HCT116 (cell line): ENCODE measurements at regions of chr20 and their contacts with region 1.

Region 1: GRCh38 chr20:9359561-9360308 is 154.7 kb upstream of the LAMP5 start:
- DNase-seq: peak; percentile 46
- ATAC-seq: peak; percentile 83
- H3K4me3 ChIP-seq: no peak overlapping the region
- H3K27ac ChIP-seq: no peak overlapping the region
- H3K4me1 ChIP-seq: no peaks in the 10 kb centered on the region
- H3K27me3 ChIP-seq: no peaks in the 10 kb centered on the region
- CTCF ChIP-seq: peak; percentile 27 to 69 (median 66); a peak in 4 of 6 replicates
- POLR2A ChIP-seq: no peak
- RAD21 ChIP-seq: peak; percentile 72

Region 2: GRCh38 chr20:8756410-8756809 is 603.3 kb before region 1 on chr20:
- CTCF ChIA-PET with region 1: interaction called, 6 read pairs
- POLR2A ChIA-PET with region 1: no interaction called
- RAD21 ChIA-PET with region 1: no interaction called
- intact Hi-C with region 1: loop called (anchors 1 kb)
- DNase-seq: peak; percentile 18
- ATAC-seq: peak; percentile 85
- H3K4me3 ChIP-seq: no peak overlapping the region
- H3K27ac ChIP-seq: no peak overlapping the region
- H3K4me1 ChIP-seq: peaks cover 3 to 15% of the 10 kb centered on the region in 2 experiments; a peak in 3 of 4 replicates
- H3K27me3 ChIP-seq: no peaks in the 10 kb centered on the region
- CTCF ChIP-seq: no peak
- POLR2A ChIP-seq: no peak
- RAD21 ChIP-seq: no peak

Region 3: GRCh38 chr20:8790442-8791074 is 569.2 kb before region 1 on chr20:
- CTCF ChIA-PET with region 1: interaction called, 13 read pairs
- POLR2A ChIA-PET with region 1: no interaction called
- RAD21 ChIA-PET with region 1: no interaction called
- intact Hi-C with region 1: loop called (anchors 1 kb)
- DNase-seq: peak; percentile 24
- ATAC-seq: peak; percentile 70
- H3K4me3 ChIP-seq: no peak overlapping the region
- H3K27ac ChIP-seq: no peak overlapping the region
- H3K4me1 ChIP-seq: peaks cover 0 to 4% of the 10 kb centered on the region in 2 experiments; a peak in 1 of 4 replicates
- H3K27me3 ChIP-seq: no peaks in the 10 kb centered on the region
- CTCF ChIP-seq: peak; percentile 53 to 96 (median 85); a peak in 5 of 6 replicates
- POLR2A ChIP-seq: no peak
- RAD21 ChIP-seq: peak; percentile 66

Region 4: DNA sequence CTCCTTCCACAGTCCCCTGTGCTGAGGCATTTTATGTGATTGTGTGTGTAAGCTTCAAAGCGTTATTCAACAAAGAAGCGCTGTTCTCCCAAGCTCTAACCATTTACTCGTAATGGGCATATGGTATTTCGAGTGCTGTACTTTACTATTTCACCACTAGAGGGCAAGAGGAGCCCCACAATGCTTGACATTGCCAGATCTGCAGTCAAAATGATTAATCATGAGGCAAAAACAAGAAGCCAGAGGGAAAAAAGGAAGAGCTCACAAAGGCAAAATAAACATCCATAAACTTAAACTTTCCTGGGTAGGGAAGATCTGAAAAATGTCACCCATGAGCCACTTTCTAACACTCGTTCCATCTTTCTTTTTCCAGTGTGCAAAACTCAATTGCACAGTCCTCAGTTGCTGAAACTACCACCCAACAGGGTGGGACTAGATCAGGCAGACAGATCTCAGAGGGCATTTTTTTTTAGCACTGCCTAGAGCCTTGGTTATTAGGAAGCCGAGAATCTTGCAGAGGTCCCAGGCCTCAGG is 505.9 kb before region 1 on chr20:
- CTCF ChIA-PET with region 1: interaction called, 4 read pairs
- POLR2A ChIA-PET with region 1: no interaction called
- RAD21 ChIA-PET with region 1: no interaction called
- intact Hi-C with region 1: loop called (anchors 1 kb)
- DNase-seq: peak; percentile 40
- ATAC-seq: peak; percentile 92
- H3K4me3 ChIP-seq: no peak overlapping the region
- H3K27ac ChIP-seq: no peak overlapping the region
- H3K4me1 ChIP-seq: no peaks in the 10 kb centered on the region
- H3K27me3 ChIP-seq: no peaks in the 10 kb centered on the region
- CTCF ChIP-seq: peak; percentile 69 to 88 (median 80)
- POLR2A ChIP-seq: no peak
- RAD21 ChIP-seq: peak; percentile 80

Region 5: GRCh38 chr20:9215539-9215938 is 144.2 kb before region 1 on chr20:
- CTCF ChIA-PET with region 1: no interaction called
- POLR2A ChIA-PET with region 1: no interaction called
- RAD21 ChIA-PET with region 1: no interaction called
- intact Hi-C with region 1: loop called (anchors 1 kb)
- DNase-seq: peak; percentile 6
- ATAC-seq: peak; percentile 62; the same call in 1 of the 2 replicates
- H3K4me3 ChIP-seq: no peak overlapping the region
- H3K27ac ChIP-seq: no peak overlapping the region
- H3K4me1 ChIP-seq: peaks cover 5 to 11% of the 10 kb centered on the region in 2 experiments
- H3K27me3 ChIP-seq: no peaks in the 10 kb centered on the region
- CTCF ChIP-seq: peak in 2 of 3 experiments; percentile 53 to 67; a peak in 4 of 6 replicates
- POLR2A ChIP-seq: no peak
- RAD21 ChIP-seq: peak; percentile 49

Region 6: GRCh38 chr20:9280666-9281065 is 79.1 kb before region 1 on chr20:
- CTCF ChIA-PET with region 1: no interaction called
- POLR2A ChIA-PET with region 1: no interaction called
- RAD21 ChIA-PET with region 1: no interaction called
- intact Hi-C with region 1: no loop called
- DNase-seq: no peak
- ATAC-seq: no peak
- H3K4me3 ChIP-seq: no peak overlapping the region
- H3K27ac ChIP-seq: no peak overlapping the region
- H3K4me1 ChIP-seq: no peaks in the 10 kb centered on the region
- H3K27me3 ChIP-seq: no peaks in the 10 kb centered on the region
- CTCF ChIP-seq: no peak
- POLR2A ChIP-seq: no peak
- RAD21 ChIP-seq: no peak